ENCODE measurements at regions of chr2 and their contacts with region 1.

Region 1: GRCh38 chr2:224357098-224357901 is 44.6 kb downstream of the FAM124B start:
- DNase-seq: peak; percentile 60
- ATAC-seq: peak; percentile 87
- H3K4me3 ChIP-seq: no peak overlapping the region
- H3K27ac ChIP-seq: no peak overlapping the region
- H3K4me1 ChIP-seq: no peaks in the 10 kb centered on the region; the same call in 1 of the 2 replicates
- H3K27me3 ChIP-seq: peaks cover 16% of the 10 kb centered on the region
- CTCF ChIP-seq: peak; percentile 85
- POLR2A ChIP-seq: no peak
- RAD21 ChIP-seq: peak; percentile 88

Region 2: GRCh38 chr2:224211791-224212190 is 145.5 kb before region 1 on chr2:
- CTCF ChIA-PET with region 1: no interaction called
- POLR2A ChIA-PET with region 1: no interaction called
- dilution Hi-C with region 1: no loop called
- in situ Hi-C with region 1: no loop called
- intact Hi-C with region 1: no loop called
- DNase-seq: no peak
- ATAC-seq: no peak
- H3K4me3 ChIP-seq: no peak overlapping the region
- H3K27ac ChIP-seq: no peak overlapping the region
- H3K4me1 ChIP-seq: no peaks in the 10 kb centered on the region
- H3K27me3 ChIP-seq: no peaks in the 10 kb centered on the region; the same call in none of the 2 replicates
- CTCF ChIP-seq: no peak
- POLR2A ChIP-seq: no peak
- RAD21 ChIP-seq: no peak

Region 3: GRCh38 chr2:224449212-224450147 is 92.2 kb after region 1 on chr2:
- CTCF ChIA-PET with region 1: no interaction called
- POLR2A ChIA-PET with region 1: no interaction called
- dilution Hi-C with region 1: no loop called
- in situ Hi-C with region 1: no loop called
- intact Hi-C with region 1: loop called (anchors 5 kb)
- DNase-seq: no peak
- ATAC-seq: no peak
- H3K4me3 ChIP-seq: no peak overlapping the region
- H3K27ac ChIP-seq: no peak overlapping the region
- H3K4me1 ChIP-seq: no peaks in the 10 kb centered on the region
- H3K27me3 ChIP-seq: peaks cover 1% of the 10 kb centered on the region; the same call in 1 of the 2 replicates
- CTCF ChIP-seq: peak; percentile 49
- POLR2A ChIP-seq: no peak
- RAD21 ChIP-seq: peak; percentile 43; the same call in 1 of the 2 replicates

Region 4: GRCh38 chr2:224520064-224520463 is 162.8 kb after region 1 on chr2:
- CTCF ChIA-PET with region 1: no interaction called
- POLR2A ChIA-PET with region 1: no interaction called
- dilution Hi-C with region 1: no loop called
- in situ Hi-C with region 1: no loop called
- intact Hi-C with region 1: no loop called
- DNase-seq: peak; percentile 92
- ATAC-seq: peak; percentile 72
- H3K4me3 ChIP-seq: no peak overlapping the region
- H3K27ac ChIP-seq: peak overlapping the region; percentile 57; the same call in 1 of the 2 replicates
- H3K4me1 ChIP-seq: peaks cover 18% of the 10 kb centered on the region
- H3K27me3 ChIP-seq: no peaks in the 10 kb centered on the region
- CTCF ChIP-seq: no peak
- POLR2A ChIP-seq: no peak
- RAD21 ChIP-seq: no peak

Region 5: GRCh38 chr2:224585205-224586088 is 228.1 kb after region 1 on chr2 and contains the start of gene CUL3:
- CTCF ChIA-PET with region 1: no interaction called
- POLR2A ChIA-PET with region 1: no interaction called
- dilution Hi-C with region 1: no loop called
- in situ Hi-C with region 1: no loop called
- intact Hi-C with region 1: loop called (anchors 5 kb)
- DNase-seq: peak; percentile 96
- ATAC-seq: peak; percentile 95
- H3K4me3 ChIP-seq: peak within 1 kb of the TSS; percentile 72
- H3K27ac ChIP-seq: peak within 1 kb of the TSS; percentile 90
- H3K4me1 ChIP-seq: 0 out of 2 replicates have a peak, but pooled peaks cover 2% of the 10 kb centered on the region
- H3K27me3 ChIP-seq: no peaks in the 10 kb centered on the region
- CTCF ChIP-seq: no peak
- POLR2A ChIP-seq: peak; percentile 90
- RAD21 ChIP-seq: no peak
- total RNA-seq, gene CUL3: 45.7 and 78.3 TPM in 2 replicates

Region 6: GRCh38 chr2:224778474-224778877 is 421.2 kb after region 1 on chr2:
- CTCF ChIA-PET with region 1: no interaction called
- POLR2A ChIA-PET with region 1: no interaction called
- dilution Hi-C with region 1: no loop called
- in situ Hi-C with region 1: no loop called
- intact Hi-C with region 1: loop called (anchors 2 kb)
- DNase-seq: peak; percentile 60
- ATAC-seq: peak; percentile 70; the same call in 1 of the 2 replicates
- H3K4me3 ChIP-seq: no peak overlapping the region
- H3K27ac ChIP-seq: no peak overlapping the region
- H3K4me1 ChIP-seq: 0 out of 2 replicates have a peak, but pooled peaks cover 2% of the 10 kb centered on the region
- H3K27me3 ChIP-seq: no peaks in the 10 kb centered on the region
- CTCF ChIP-seq: peak; percentile 73
- POLR2A ChIP-seq: no peak
- RAD21 ChIP-seq: peak; percentile 62

Region 7: GRCh38 chr2:225637259-225637658 is 1280.0 kb after region 1 on chr2:
- CTCF ChIA-PET with region 1: no interaction called
- POLR2A ChIA-PET with region 1: no interaction called
- dilution Hi-C with region 1: no loop called
- in situ Hi-C with region 1: loop called (anchors 25 kb)
- intact Hi-C with region 1: no loop called
- DNase-seq: no peak
- ATAC-seq: no peak
- H3K4me3 ChIP-seq: no peak overlapping the region
- H3K27ac ChIP-seq: no peak overlapping the region
- H3K4me1 ChIP-seq: no peaks in the 10 kb centered on the region
- H3K27me3 ChIP-seq: peaks cover 6% of the 10 kb centered on the region
- CTCF ChIP-seq: no peak
- POLR2A ChIP-seq: no peak
- RAD21 ChIP-seq: no peak

Measured in IMR-90 (cell line).